Activated T-helper 2 cell treated with anti-CD3 and anti-CD28 coated beads, Interferon-gamma antibody, Interleukin-2, Interleukin-4, amounts not matched to agents 10 μg/mL and 5 μg/mL and 100 μg/mL, durations not matched to agents 14 hours and 24 hours and 36 hours (primary cell): ENCODE measurements at regions of chr4 and their contacts with region 1.

Region 1: DNA sequence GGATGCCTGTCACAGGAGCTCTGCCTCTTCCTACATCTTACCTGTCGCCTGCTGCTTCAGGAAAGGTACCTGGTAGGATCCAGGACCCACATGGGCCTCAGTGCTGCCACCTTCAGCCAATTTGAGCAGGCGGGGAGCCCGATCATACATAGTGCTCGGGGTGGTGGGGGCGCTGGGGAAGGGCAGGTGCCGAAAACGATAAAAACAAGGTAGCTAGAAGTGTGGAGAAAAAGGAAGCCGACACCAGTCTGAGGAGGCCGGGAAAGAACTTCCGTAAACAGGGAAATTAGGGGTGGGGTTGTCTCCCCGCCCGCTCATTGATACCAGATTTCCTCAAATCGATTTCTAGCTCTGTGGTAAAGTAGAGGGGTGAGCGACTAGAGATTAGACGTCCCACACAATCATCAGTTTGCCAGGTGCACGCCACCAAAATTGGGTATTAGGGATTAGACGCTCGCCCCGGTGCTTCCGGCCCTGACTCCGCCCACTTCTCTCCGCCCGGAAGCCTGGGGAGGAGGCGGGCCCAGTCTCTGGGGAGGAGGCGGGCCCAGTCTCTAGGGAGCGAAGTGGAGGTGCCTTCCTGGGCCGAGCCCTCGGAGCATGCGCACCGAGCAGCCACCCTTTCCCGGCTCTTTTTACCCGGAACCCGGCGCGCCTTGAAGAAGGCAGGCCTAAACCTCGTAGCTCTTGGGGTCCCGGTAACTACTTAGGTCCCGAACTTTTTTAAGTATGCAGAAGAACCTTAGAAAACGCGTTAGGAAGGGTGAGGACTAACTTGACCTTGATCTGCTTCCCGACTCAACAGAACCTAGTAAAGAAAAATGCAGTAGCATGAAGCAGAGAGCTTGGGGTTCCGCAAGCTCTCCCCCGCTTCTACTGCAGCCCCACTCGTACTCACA is at the start of gene STPG2:
- DNase-seq: peak; percentile 88
- H3K4me3 Mint-ChIP-seq: peak within 1 kb of the TSS; percentile 83
- H3K27ac Mint-ChIP-seq: peak within 1 kb of the TSS; percentile 90
- H3K4me1 Mint-ChIP-seq: peaks cover 26% of the 10 kb centered on the region
- H3K27me3 Mint-ChIP-seq: peaks cover 13% of the 10 kb centered on the region
- total RNA-seq, gene STPG2: not detected in 2 replicates

Region 2: DNA sequence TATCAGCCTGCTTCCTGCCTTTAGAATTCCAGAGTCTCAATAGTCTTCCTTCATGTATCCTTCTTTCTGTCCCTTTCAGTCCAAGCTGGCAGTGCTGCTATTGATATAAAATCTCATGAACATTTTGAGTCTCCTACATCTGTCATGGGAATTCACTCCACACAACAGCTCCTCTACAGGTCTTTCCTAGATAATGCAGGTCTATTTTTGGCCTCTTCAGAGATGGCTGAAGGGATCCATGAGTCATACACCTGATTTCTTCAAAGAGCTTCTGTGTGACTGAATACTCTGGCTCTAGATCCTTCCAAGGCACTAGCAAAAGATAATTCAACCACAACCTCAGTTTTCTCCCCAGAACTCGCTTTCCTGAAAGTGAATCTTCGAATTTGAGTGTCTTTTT is 115.4 kb before region 1 on chr4:
- intact Hi-C with region 1: no loop called
- DNase-seq: no peak
- H3K4me3 Mint-ChIP-seq: no peak overlapping the region
- H3K27ac Mint-ChIP-seq: no peak overlapping the region
- H3K4me1 Mint-ChIP-seq: no peaks in the 10 kb centered on the region
- H3K27me3 Mint-ChIP-seq: no peaks in the 10 kb centered on the region

Region 3: GRCh38 chr4:98446499-98447375 is 303.5 kb after region 1 on chr4:
- intact Hi-C with region 1: loop called (anchors 2 kb)
- DNase-seq: peak; percentile 60
- H3K4me3 Mint-ChIP-seq: peak overlapping the region; percentile 63
- H3K27ac Mint-ChIP-seq: peak overlapping the region; percentile 92
- H3K4me1 Mint-ChIP-seq: peaks cover 42% of the 10 kb centered on the region
- H3K27me3 Mint-ChIP-seq: no peaks in the 10 kb centered on the region

Region 4: DNA sequence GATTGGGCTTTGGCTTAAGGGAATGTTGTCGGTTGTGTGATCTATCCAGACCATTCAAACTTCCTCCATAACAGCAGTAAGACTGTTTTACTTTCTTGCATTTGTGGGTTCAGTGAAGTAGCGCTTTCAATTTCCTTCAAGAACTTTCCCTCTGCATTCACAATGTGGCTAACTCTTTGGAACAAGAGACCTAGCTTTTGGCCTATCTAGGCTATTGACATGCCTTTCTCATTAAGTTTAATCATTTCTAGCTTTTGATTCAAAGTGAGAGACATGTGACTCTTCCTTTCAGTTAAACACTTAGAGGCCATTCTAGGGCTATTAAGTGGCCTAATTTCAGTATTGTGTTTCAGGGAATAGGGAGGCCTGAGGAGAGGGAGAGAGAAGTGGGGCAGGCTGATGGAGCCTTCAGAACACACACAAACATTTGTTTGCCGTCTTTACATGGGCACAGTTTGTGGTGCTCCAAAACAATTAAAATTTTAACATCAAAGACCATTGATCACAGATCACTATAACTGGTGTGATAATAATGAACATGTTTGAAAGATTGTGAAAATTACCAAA is 911.3 kb after region 1 on chr4:
- intact Hi-C with region 1: loop called (anchors 10 kb)
- DNase-seq: no peak
- H3K4me3 Mint-ChIP-seq: no peak overlapping the region
- H3K27ac Mint-ChIP-seq: peak overlapping the region; percentile 75
- H3K4me1 Mint-ChIP-seq: peaks cover 41% of the 10 kb centered on the region
- H3K27me3 Mint-ChIP-seq: no peaks in the 10 kb centered on the region

Region 5: DNA sequence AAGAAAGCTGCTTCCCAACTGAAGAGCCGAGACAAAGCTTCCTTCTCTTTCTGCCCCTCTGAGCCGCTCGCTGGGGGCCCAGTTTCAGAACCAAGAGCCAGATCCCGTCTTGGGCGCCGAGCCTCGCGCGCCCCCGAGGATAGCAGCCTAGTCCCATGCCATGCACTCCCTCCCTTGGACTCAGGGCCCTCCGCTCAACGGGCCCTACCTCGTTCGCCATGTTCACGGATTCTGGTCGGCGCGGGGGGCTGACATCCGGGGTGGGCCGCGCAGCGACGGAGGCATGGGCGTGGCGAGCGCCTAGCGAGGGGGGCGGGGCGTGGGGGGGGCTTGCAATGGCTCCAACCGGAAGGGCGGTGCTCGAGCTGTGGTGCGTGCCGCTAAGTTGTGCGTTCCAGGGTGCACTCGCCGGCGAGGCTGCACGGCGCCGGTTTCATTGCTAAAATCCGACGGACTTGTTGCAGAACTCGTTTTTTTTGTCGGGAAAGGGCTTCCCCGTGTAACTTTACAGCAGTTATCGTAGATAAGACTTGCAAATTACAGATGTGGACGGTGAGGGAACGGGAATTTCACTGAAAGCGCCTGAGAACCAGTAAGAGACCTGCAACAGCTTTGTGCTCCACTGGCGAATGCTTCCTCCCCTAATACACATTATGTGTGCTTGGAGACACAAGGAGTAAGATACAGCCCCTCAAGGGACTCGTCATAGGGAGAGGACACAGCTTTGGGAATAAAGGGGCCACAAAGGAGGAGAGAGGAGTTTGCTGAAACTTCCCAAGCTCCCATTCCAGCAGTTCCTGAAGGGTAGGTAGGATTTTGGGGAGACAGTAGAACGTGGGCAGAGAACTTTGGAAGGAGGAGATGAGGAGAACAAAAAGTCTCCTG is 945.5 kb after region 1 on chr4 and contains the start of gene ADH5:
- intact Hi-C with region 1: loop called (anchors 1 kb)
- DNase-seq: peak; percentile 80
- H3K4me3 Mint-ChIP-seq: peak within 1 kb of the TSS; percentile 95
- H3K27ac Mint-ChIP-seq: peak within 1 kb of the TSS; percentile 92
- H3K4me1 Mint-ChIP-seq: peaks cover 26% of the 10 kb centered on the region
- H3K27me3 Mint-ChIP-seq: peaks cover 4% of the 10 kb centered on the region
- total RNA-seq, gene ADH5: 93.8 and 98.6 TPM in 2 replicates

Region 6: DNA sequence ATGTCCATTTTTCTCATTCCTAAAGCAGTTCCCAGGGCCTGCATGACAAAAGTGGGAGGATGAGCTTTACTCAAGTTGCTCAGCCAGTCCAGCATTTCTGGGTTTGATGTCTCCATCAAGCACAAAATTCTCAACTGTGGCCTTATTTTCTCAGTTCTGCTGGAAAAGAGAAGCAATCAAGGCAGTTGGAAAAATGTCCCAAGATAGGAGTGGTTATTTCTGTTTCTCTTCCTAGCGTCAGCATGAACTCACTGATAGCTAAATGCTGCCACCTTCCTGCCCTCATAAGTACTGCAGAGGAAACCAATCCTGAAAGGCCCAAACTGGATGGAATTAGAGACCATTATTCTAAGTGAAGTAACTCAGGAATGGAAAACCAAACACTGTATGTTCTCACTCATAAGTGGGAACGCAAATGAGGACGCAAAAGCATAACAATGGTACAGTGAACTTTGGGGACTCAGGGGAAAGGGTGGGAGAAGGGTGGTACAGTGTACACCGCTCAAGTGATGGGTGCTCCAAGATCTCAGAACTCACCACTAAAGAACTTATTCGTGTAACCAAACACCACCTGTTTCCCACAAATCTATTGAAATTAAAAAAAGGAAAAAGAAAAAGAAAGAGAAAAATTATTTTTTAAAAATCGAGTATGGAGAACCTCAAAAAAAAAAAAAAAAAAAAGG is 1262.3 kb after region 1 on chr4:
- intact Hi-C with region 1: loop called (anchors 10 kb)
- DNase-seq: peak; percentile 13
- H3K4me3 Mint-ChIP-seq: no peak overlapping the region
- H3K27ac Mint-ChIP-seq: no peak overlapping the region
- H3K4me1 Mint-ChIP-seq: peaks cover 21% of the 10 kb centered on the region
- H3K27me3 Mint-ChIP-seq: peaks cover 10% of the 10 kb centered on the region

Region 7: GRCh38 chr4:99504804-99505569 is 1361.7 kb after region 1 on chr4:
- intact Hi-C with region 1: loop called (anchors 5 kb)
- DNase-seq: no peak
- H3K4me3 Mint-ChIP-seq: no peak overlapping the region
- H3K27ac Mint-ChIP-seq: no peak overlapping the region
- H3K4me1 Mint-ChIP-seq: peaks cover 32% of the 10 kb centered on the region
- H3K27me3 Mint-ChIP-seq: peaks cover 2% of the 10 kb centered on the region